ENCODE measurements at regions of chr7 and their contacts with region 1.

Region 1: GRCh38 chr7:104983578-104984539 is 30.1 kb upstream of the KMT2E start:
- DNase-seq: peak; percentile 82 to 91 (median 86)
- H3K4me3 ChIP-seq: peak overlapping the region; percentile 76 to 91 (median 85)
- H3K27ac ChIP-seq: peak overlapping the region; percentile 98 to 99
- H3K4me1 ChIP-seq: peaks cover 13 to 48% (median 22%) of the 10 kb centered on the region in 4 experiments
- H3K27me3 ChIP-seq: no peaks in the 10 kb centered on the region

Region 2: GRCh38 chr7:104923010-104923421 is 60.8 kb before region 1 on chr7:
- CTCF ChIA-PET with region 1: interaction called, 95 read pairs
- POLR2A ChIA-PET with region 1: interaction called, 3 read pairs
- DNase-seq: peak; percentile 89 to 92 (median 90)
- H3K4me3 ChIP-seq: no peak overlapping the region
- H3K27ac ChIP-seq: no peak overlapping the region
- H3K4me1 ChIP-seq: peaks cover 0 to 6% (median 1%) of the 10 kb centered on the region in 4 experiments
- H3K27me3 ChIP-seq: no peaks in the 10 kb centered on the region

Region 3: GRCh38 chr7:105003275-105003674 is 19.4 kb after region 1 on chr7:
- CTCF ChIA-PET with region 1: interaction called, 316 read pairs
- POLR2A ChIA-PET with region 1: interaction called, 16 read pairs
- DNase-seq: no peak
- H3K4me3 ChIP-seq: no peak overlapping the region
- H3K27ac ChIP-seq: peak overlapping the region in 1 of 2 experiments; percentile 71
- H3K4me1 ChIP-seq: peaks cover 0 to 33% (median 13%) of the 10 kb centered on the region in 4 experiments
- H3K27me3 ChIP-seq: no peaks in the 10 kb centered on the region

Region 4: DNA sequence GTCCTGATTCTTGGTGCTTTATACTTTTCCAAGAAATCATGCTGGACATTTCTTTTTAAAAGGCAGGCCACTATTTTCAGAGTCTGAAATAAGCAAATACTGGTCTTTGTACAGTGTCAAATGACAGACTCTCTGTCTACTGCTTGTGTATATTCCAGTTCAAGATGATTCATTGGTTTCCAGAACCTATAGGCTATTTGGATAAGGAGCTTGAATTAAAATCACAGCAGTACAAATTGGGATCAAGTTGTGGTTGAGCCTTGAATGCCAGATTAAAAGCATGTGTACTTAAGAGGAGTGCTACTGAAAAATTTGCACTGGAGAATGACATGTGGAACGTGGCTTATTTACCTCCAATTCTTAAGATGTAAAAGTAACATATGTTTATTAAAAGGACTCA is 40.9 kb after region 1 on chr7:
- CTCF ChIA-PET with region 1: interaction called, 12 read pairs
- POLR2A ChIA-PET with region 1: no interaction called
- DNase-seq: no peak
- H3K4me3 ChIP-seq: no peak overlapping the region
- H3K27ac ChIP-seq: no peak overlapping the region
- H3K4me1 ChIP-seq: peaks cover 9 to 41% (median 31%) of the 10 kb centered on the region in 4 experiments
- H3K27me3 ChIP-seq: no peaks in the 10 kb centered on the region

Region 5: DNA sequence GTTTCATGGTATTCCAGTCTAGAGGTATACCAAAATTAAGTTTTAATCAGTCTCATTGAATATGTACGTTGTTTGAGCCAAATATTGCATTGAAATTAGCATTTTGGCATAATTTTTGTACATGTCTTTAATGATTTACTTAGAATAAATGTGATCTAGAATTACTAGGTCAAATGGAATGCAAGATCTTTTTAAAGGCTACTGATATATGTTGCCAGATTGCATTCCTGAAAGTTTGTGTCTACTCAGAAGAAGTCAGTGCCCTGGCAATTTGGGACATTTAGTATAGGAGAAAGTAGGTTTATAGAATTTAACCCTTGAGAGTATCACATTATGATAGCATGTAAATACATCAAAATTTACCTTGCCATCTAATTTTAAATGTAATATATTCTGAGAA is 62.6 kb after region 1 on chr7:
- CTCF ChIA-PET with region 1: interaction called, 98 read pairs
- POLR2A ChIA-PET with region 1: no interaction called
- DNase-seq: no peak
- H3K4me3 ChIP-seq: no peak overlapping the region
- H3K27ac ChIP-seq: no peak overlapping the region
- H3K4me1 ChIP-seq: no peaks in the 10 kb centered on the region
- H3K27me3 ChIP-seq: no peaks in the 10 kb centered on the region

Region 6: DNA sequence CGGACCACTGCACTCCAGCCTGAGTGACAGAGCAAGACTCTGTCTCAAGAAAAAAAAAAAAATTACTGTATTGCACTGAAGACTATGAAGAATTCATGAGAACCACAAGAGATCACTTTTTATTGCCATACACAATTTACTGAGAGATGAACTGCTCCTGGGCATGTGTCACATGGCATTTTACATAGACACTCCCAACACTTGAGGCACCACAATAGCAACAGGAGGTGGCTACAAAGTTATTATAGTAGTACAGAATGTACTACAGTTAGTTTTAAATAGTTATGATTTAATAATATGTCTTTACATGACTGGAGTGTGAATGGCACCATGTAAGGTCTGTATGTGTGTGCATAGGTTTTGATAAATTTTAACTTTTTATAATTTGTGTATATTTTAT is 100.7 kb after region 1 on chr7:
- CTCF ChIA-PET with region 1: interaction called, 14 read pairs
- POLR2A ChIA-PET with region 1: no interaction called
- DNase-seq: no peak
- H3K4me3 ChIP-seq: no peak overlapping the region
- H3K27ac ChIP-seq: no peak overlapping the region
- H3K4me1 ChIP-seq: no peaks in the 10 kb centered on the region
- H3K27me3 ChIP-seq: no peaks in the 10 kb centered on the region

Measured in common myeloid progenitor, CD34-positive (primary cell).